Dorsolateral prefrontal cortex (tissue), 120 donors: ENCODE measurements at regions of chr12 and their contacts with region 1.

Region 1: DNA sequence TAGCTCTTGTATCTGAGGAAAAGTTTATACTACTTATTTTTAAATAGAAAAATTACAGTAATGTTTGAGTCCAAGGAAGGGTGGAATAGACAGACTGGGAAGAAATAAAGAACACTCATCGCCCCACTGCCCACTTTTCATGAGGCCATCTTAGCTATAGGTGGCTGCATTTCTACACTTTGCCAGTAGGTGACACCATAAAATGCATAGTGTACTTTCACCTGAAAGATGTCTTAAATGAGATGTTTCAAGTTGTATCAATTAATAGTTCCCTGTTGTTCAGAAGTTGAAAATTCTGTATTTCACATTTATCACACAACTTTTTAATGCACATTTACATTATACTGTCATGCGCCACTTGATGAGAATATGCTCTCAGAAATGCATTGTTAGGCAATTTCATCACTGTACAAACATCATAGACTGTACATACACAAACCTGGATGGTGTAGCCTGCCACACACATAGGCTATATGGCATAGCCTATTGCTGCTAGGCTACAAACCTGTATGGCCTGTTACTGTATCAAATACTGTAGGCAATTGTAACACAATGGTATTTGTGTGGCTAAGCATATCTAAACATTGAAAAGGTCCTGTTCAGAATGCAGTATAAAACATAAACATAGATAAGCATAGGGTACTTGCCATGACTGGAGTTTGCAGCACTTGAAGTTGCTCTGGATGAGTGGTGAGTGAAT is 27.6 kb downstream of the PMCH start:
- DNase-seq: no peak
- H3K4me3 ChIP-seq: no peak overlapping the region
- H3K27ac ChIP-seq: no peak overlapping the region
- H3K27me3 ChIP-seq: no peaks in the 10 kb centered on the region
- CTCF ChIP-seq: peak in 54 of 56 donors; percentile 47 to 74 (median 63)

Region 2: GRCh38 chr12:102484428-102484958 is 314.4 kb after region 1 on chr12:
- intact Hi-C with region 1: loop called in 1 of 2 experiments (anchors 10 kb)
- DNase-seq: peak in 9 of 10 donors; percentile 19 to 54 (median 45)
- H3K4me3 ChIP-seq: peak overlapping the region in 39 of 59 donors; percentile 15 to 62 (median 33)
- H3K27ac ChIP-seq: peak overlapping the region in 2 of 59 donors; percentile 15 to 25
- H3K27me3 ChIP-seq: peaks cover 0 to 3% (median 0%) of the 10 kb centered on the region in 45 donors
- CTCF ChIP-seq: peak; percentile 84 to 98 (median 94)